Posterior vena cava (tissue), 2 donors: ENCODE measurements at regions of chr16 and their contacts with region 1.

Region 1: GRCh38 chr16:57300387-57301125 is 16.1 kb upstream of the PLLP start:
- DNase-seq: peak; percentile 99

Region 2: GRCh38 chr16:57235128-57236021 is 65.2 kb before region 1 on chr16:
- intact Hi-C with region 1: no loop called
- DNase-seq: no peak

Region 3: GRCh38 chr16:57284208-57284951 is 16.2 kb before region 1 on chr16 and contains the start of gene PLLP:
- intact Hi-C with region 1: no loop called
- DNase-seq: no peak
- total RNA-seq, gene PLLP: 1.7 to 3.8 TPM

Region 4: DNA sequence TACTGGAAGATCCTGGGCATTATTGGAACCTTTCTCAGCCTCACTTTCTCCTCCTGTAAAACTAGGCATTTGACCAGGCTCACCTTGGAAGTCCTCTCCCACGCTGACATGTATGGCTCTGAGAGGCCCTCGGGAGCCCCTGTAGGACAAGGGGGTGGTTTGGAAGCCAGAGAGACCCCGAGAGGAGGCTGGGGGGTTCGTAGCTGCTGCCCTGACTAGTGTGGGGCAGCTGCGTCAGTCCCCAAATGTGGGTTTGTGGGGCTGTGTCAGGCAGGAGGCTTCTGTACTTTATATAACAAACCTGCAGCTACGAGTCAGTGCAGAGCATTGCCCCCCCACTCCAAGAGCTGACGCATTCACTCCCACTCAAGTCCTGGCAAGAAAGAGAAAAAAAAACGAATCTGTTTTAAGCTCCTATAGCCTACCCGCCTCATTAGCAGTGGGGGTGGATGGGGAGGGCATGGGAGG is 73.5 kb after region 1 on chr16:
- intact Hi-C with region 1: loop called in 1 of 2 experiments (anchors 2 kb)
- DNase-seq: no peak

Region 5: DNA sequence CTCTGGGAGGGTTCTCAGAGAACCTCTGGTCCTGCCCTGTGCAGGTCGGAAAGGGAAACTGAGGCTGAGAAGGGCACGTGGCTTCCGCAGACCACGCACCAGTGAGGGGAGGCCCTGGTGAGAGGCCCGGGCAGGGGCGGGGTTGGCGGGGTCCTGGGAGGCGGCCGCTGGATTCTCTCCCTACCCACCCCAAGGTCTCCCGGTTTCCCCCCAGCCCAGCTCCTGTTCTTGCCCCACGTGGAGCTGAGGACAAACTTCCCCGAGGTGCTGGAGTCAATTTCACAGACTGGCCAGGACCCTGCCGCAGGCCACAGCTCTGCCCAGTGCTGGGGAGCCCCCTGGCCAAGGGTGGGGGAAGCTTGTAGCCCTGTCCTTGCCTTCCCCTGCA is 115.6 kb after region 1 on chr16:
- intact Hi-C with region 1: loop called (anchors 2 kb)
- DNase-seq: no peak

Region 6: GRCh38 chr16:57422026-57422944 is 121.7 kb after region 1 on chr16:
- intact Hi-C with region 1: loop called (anchors 2 kb)
- DNase-seq: peak; percentile 54